Activated T-helper 1 cell treated with anti-CD3 and anti-CD28 coated beads, Interleukin-12 subunit alpha, Interleukin-12 subunit beta, Interleukin-2, Interleukin-4 antibody, amounts not matched to agents 30 ng/mL and 10 ng/mL and 1 ng/mL, durations not matched to agents 14 hours and 24 hours and 36 hours (primary cell): ENCODE measurements at regions of chr10 and their contacts with region 1.

Region 1: GRCh38 chr10:23158370-23158769 is 33.7 kb upstream of the PTF1A start:
- DNase-seq: no peak
- H3K4me3 Mint-ChIP-seq: no peak overlapping the region
- H3K27ac Mint-ChIP-seq: no peak overlapping the region
- H3K4me1 Mint-ChIP-seq: peaks cover 4% of the 10 kb centered on the region
- H3K27me3 Mint-ChIP-seq: peaks cover 5% of the 10 kb centered on the region

Region 2: GRCh38 chr10:23293145-23293724 is 134.9 kb after region 1 on chr10:
- intact Hi-C with region 1: loop called (anchors 2 kb)
- DNase-seq: no peak
- H3K4me3 Mint-ChIP-seq: no peak overlapping the region
- H3K27ac Mint-ChIP-seq: no peak overlapping the region
- H3K4me1 Mint-ChIP-seq: no peaks in the 10 kb centered on the region
- H3K27me3 Mint-ChIP-seq: peaks cover 13% of the 10 kb centered on the region

Region 3: DNA sequence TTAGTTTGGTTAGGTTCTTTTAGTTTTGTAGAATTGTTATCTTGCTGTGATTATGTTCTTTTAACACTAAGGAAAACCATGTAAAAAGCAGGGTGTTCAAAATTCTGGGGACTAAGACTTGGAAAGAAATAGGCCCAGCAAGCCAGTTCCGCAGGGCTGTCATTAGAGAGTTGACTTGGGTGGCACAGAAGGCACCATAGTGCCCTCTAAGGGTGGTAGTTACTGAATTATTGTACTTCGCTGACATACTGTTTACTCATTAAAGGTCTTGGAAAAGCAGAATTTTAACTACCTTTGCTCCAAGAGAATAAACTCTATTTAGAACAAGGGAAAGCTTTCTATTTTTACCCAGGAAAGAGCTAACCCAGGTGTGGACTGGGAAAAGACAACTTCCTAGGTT is 367.0 kb after region 1 on chr10:
- intact Hi-C with region 1: loop called (anchors 2 kb)
- DNase-seq: no peak
- H3K4me3 Mint-ChIP-seq: no peak overlapping the region
- H3K27ac Mint-ChIP-seq: no peak overlapping the region
- H3K4me1 Mint-ChIP-seq: no peaks in the 10 kb centered on the region
- H3K27me3 Mint-ChIP-seq: peaks cover 2% of the 10 kb centered on the region

Region 4: GRCh38 chr10:23994479-23995046 is 836.2 kb after region 1 on chr10:
- intact Hi-C with region 1: loop called (anchors 10 kb)
- DNase-seq: peak; percentile 5
- H3K4me3 Mint-ChIP-seq: no peak overlapping the region
- H3K27ac Mint-ChIP-seq: no peak overlapping the region
- H3K4me1 Mint-ChIP-seq: no peaks in the 10 kb centered on the region
- H3K27me3 Mint-ChIP-seq: no peaks in the 10 kb centered on the region

Region 5: DNA sequence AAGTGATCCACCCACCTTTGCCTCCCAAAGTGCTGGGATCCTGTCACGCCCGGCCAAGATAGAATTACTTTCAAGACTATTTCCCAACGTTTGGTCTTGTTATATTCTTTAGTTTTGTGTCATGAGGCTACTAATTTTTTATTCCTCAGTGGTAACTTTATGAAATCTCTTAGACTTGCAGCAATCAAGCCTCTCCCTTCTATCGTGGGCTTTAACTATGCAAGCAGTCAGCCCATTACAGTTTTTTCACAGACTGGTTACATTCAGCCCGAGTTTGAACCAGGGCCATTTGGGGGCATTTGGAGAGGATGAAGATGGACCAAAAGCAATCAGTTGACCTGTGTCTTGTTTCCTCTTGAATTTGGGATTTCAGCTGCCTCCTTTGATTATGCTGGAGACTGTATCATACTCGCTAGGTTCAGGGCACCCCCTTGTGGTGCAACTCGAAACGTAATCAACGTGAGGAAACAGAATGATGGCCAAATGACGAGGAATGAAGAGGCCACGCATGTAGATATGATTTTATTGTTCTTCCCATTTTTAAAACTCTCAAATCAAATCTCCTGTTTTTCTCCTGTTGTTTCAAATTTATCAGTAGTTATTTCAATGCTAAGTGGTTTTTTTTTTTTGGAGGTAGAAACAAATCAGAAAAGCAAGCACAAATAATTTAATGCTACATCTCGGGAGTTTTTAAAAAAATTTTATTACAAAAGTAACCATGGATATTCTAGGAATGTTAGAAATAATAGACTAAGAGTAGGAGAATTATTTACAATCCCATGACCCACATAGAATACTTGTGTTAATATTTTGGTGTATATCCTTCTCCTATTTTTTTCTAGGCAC is 1202.1 kb after region 1 on chr10:
- intact Hi-C with region 1: loop called (anchors 5 kb)
- DNase-seq: peak; percentile 5
- H3K4me3 Mint-ChIP-seq: no peak overlapping the region
- H3K27ac Mint-ChIP-seq: no peak overlapping the region
- H3K4me1 Mint-ChIP-seq: peaks cover 6% of the 10 kb centered on the region
- H3K27me3 Mint-ChIP-seq: peaks cover 7% of the 10 kb centered on the region

Region 6: GRCh38 chr10:24556750-24557742 is 1398.7 kb after region 1 on chr10:
- intact Hi-C with region 1: loop called (anchors 2 kb)
- DNase-seq: no peak
- H3K4me3 Mint-ChIP-seq: no peak overlapping the region
- H3K27ac Mint-ChIP-seq: no peak overlapping the region
- H3K4me1 Mint-ChIP-seq: peaks cover 6% of the 10 kb centered on the region
- H3K27me3 Mint-ChIP-seq: peaks cover 2% of the 10 kb centered on the region